ENCODE measurements at regions of chr7 and their contacts with region 1.

Region 1: DNA sequence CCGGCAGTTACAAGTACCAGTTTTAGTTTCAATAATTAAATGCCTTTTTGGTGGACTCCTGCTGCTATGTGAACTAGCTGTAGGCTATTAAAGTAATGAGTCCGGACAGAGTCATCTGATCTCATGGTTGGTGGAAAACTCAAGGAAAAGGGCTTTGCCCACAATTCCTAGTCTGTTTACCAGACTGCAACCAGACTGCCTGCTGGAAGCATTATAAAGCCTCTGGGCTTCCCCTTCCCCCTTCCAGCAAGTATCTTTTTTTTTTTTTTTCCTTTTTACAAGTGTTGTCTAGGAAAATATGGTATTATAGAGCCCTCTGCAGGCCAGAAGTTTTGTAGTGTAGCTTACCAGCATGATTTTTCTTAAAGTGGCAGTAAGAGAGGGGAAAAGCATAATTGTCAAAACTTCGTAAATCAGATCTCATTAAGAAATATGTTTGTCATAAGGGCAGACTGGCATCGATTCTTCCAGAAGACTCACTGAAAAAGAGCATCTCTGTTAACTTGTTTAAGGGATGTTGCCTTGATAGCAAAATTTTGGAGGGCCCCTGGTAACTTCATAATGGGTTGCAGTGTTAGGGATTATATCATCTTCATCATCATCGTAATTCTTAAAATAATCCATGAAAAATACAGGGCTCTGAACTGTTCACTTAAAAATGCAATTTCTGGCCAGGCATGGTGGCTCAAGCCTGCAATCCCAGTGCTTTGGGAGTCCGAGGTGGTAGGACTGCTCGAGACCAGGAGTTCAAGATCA is 181.3 kb downstream of the TAX1BP1 start:
- H3K4me3 ChIP-seq: no peak overlapping the region
- H3K27ac ChIP-seq: no peak overlapping the region
- H3K4me1 ChIP-seq: peaks cover 9% of the 10 kb centered on the region; the same call in 1 of the 2 replicates
- CTCF ChIP-seq: peak; percentile 64; the same call in 1 of the 2 replicates

Region 2: GRCh38 chr7:27520815-27521790 is 400.2 kb before region 1 on chr7:
- CTCF ChIA-PET with region 1: no interaction called
- POLR2A ChIA-PET with region 1: no interaction called
- H3K4me3 ChIP-seq: no peak overlapping the region
- H3K27ac ChIP-seq: no peak overlapping the region
- H3K4me1 ChIP-seq: no peaks in the 10 kb centered on the region
- CTCF ChIP-seq: no peak

Region 3: GRCh38 chr7:27745064-27745583 is 176.1 kb before region 1 on chr7:
- CTCF ChIA-PET with region 1: interaction called, 11 read pairs
- POLR2A ChIA-PET with region 1: no interaction called
- H3K4me3 ChIP-seq: no peak overlapping the region
- H3K27ac ChIP-seq: no peak overlapping the region
- H3K4me1 ChIP-seq: peaks cover 9% of the 10 kb centered on the region
- CTCF ChIP-seq: no peak; the same call in 1 of the 2 replicates

Region 4: GRCh38 chr7:28020302-28020940 is 99.2 kb after region 1 on chr7:
- CTCF ChIA-PET with region 1: interaction called, 17 read pairs
- POLR2A ChIA-PET with region 1: no interaction called
- H3K4me3 ChIP-seq: no peak overlapping the region
- H3K27ac ChIP-seq: no peak overlapping the region
- H3K4me1 ChIP-seq: peaks cover 5% of the 10 kb centered on the region; the same call in 1 of the 2 replicates
- CTCF ChIP-seq: peak; percentile 91

Region 5: DNA sequence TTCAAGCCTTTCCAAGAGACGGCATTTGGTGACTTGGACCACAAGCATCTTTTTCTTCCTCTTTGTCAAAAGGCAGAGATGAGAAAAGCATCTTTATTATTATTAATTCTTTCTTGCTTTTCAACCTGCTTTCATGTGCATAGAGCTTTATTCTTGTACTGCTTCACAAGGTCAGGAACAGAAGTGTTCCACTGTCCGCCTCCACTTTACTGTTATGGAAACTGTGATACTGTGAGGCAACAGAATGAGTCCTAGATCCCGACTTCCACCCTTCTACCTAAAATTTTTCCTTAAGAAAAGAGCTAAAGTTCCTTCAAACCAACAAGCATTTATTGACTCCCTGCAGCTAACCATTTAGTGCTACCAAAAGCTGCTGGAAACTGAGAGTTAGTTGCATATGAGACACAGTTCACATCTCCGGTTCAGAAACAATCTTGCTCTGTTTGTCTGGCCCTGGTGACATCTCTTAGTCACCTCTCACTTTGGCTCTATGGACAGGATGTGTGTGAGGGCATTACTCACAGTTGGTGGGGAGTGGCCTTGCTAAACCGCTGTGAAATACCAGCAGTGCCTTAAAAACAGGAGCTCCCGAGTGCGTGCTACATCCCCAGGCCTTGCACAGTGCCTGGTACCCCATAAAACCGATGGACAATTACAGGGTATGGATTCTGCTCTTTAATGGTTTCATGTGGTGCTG is 1113.9 kb after region 1 on chr7:
- CTCF ChIA-PET with region 1: no interaction called
- POLR2A ChIA-PET with region 1: no interaction called
- H3K4me3 ChIP-seq: no peak overlapping the region
- H3K27ac ChIP-seq: no peak overlapping the region
- H3K4me1 ChIP-seq: no peaks in the 10 kb centered on the region
- CTCF ChIP-seq: no peak